PC-9 (cell line): ENCODE measurements at regions of chr12 and their contacts with region 1.

Region 1: DNA sequence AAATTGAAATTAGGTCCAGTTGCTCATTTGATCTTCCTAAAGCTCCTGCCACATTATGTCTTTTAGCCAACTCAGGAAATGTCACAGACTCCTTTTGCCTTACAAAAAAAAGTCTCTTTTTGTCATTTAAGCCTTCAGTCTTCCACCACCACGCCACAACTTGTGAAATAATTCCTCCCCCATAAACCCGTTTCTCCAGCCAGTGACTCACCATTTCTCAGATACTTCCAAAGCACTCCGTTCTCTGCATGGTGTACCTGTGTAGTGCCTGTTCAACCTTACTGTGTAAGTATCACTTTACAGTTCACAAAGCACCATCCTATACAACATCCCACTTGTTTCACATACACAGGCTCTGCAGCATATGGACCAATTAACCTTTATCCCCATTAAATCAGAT is 139.5 kb upstream of the AEBP2 start:
- DNase-seq: peak; percentile 75 to 87
- H3K4me3 ChIP-seq: 0 out of 2 replicates have a peak overlapping the region, but pooled peaks have one; percentile 7
- H3K27ac ChIP-seq: peak overlapping the region; percentile 63
- H3K4me1 ChIP-seq: peaks cover 22% of the 10 kb centered on the region
- H3K27me3 ChIP-seq: no peaks in the 10 kb centered on the region
- CTCF ChIP-seq: no peak

Region 2: GRCh38 chr12:18462442-18462841 is 837.3 kb before region 1 on chr12:
- CTCF ChIA-PET with region 1: no interaction called
- POLR2A ChIA-PET with region 1: interaction called, 11 read pairs
- intact Hi-C with region 1: no loop called
- DNase-seq: no peak
- H3K4me3 ChIP-seq: no peak overlapping the region
- H3K27ac ChIP-seq: no peak overlapping the region
- H3K4me1 ChIP-seq: no peaks in the 10 kb centered on the region
- H3K27me3 ChIP-seq: no peaks in the 10 kb centered on the region
- CTCF ChIP-seq: no peak

Region 3: DNA sequence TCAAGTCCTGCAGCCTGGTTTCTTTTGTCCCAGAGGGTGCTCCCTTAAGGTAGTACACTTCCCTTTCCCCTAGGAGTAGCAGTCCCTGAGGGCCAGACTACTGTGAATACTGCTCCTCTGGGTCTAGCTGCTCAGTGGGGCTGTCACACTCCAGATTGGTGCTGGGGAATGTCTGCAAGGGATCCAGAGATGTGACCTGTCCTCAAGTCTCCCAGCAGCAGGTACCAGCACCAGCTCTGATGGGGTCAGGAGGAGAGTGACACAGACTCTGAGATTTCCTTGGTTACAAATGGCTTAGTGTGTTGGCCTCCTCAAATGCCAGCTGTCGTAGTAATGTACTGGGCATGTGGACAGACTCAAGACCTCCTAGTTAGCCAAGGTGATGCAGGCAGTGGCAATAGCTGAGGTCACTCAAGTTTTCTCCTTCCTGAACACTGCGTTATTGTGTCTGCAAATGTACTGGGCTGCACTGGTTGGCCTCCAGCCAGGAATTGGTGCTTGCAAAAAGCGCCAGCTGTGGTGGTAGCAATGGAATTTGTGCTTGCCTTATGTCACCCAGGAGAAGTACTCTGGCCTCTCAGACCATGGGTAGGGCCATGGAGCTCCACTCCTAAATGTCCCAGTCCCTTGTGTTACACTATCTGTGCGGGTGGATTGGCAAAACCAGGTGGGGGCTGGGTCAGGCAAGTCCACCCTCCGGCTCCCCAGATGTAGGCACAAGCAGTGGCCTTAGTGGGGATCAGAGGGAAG is 103.2 kb after region 1 on chr12:
- CTCF ChIA-PET with region 1: no interaction called
- POLR2A ChIA-PET with region 1: no interaction called
- intact Hi-C with region 1: no loop called
- DNase-seq: peak; percentile 43 to 66
- H3K4me3 ChIP-seq: no peak overlapping the region
- H3K27ac ChIP-seq: no peak overlapping the region
- H3K4me1 ChIP-seq: no peaks in the 10 kb centered on the region; the same call in 1 of the 2 replicates
- H3K27me3 ChIP-seq: no peaks in the 10 kb centered on the region
- CTCF ChIP-seq: no peak

Region 4: DNA sequence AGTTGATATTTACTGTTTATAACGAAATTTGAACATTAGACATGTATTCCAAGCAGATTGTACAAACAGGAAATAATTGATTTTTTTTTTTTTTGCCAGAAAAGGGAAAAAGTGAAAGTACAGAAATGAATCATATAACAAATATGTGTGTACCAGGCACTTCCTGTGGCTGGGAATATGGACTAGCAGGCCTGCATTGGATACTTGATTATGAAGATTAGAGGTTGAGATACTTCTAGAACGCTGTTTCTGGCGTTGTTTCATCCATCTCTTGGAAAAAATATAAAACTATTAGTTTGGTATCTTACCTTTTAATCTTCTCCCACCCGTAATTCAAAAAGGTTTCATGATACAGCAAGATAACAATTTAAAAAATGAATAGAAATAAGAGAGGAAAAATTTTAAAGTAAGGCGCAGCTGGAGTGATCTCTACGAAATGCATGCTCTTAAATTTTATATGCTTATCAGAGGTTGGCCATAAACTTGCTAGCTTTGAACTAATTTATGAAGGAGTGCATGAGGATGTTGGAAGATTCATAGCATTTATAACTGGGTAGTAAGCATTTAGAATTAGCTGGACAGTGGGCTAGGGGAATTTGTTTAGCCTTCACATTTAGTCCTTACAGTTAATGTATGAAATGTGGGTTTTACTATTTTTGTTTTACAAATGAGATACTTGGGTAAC is 230.3 kb after region 1 on chr12:
- CTCF ChIA-PET with region 1: no interaction called
- POLR2A ChIA-PET with region 1: no interaction called
- intact Hi-C with region 1: no loop called
- DNase-seq: no peak
- H3K4me3 ChIP-seq: no peak overlapping the region
- H3K27ac ChIP-seq: 0 out of 2 replicates have a peak overlapping the region, but pooled peaks have one; percentile 15
- H3K4me1 ChIP-seq: peaks cover 22% of the 10 kb centered on the region
- H3K27me3 ChIP-seq: no peaks in the 10 kb centered on the region
- CTCF ChIP-seq: no peak